ENCODE measurements at regions of chr4 and their contacts with region 1.

Region 1: GRCh38 chr4:82462415-82462831 is 32.0 kb downstream of the ENOPH1 start:
- DNase-seq: peak; percentile 88
- ATAC-seq: peak; percentile 91

Region 2: DNA sequence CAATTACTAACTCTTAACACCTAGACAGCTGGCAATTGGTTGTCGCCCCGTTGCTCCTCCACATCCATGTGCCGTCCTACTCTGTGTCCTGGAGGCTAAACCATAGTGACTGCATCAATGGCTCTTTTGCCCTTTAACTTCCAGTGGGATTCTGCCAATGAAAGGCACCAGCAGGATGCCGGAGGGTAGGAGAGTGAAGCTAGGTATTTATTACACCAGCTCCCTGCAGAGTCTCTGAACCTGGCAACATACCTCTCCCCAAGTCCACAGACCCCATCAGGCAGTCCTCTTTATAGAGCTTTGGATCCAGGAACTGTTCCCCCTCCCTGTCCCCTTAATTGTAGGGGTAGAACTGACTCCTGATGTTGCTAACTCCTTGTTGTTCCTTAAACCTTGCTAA is 515.4 kb before region 1 on chr4:
- intact Hi-C with region 1: no loop called
- DNase-seq: no peak
- ATAC-seq: no peak

Region 3: GRCh38 chr4:82213485-82214417 is 248.7 kb before region 1 on chr4:
- intact Hi-C with region 1: no loop called
- DNase-seq: no peak
- ATAC-seq: no peak

Region 4: GRCh38 chr4:82450966-82451755 is 11.3 kb before region 1 on chr4:
- intact Hi-C with region 1: no loop called
- DNase-seq: no peak
- ATAC-seq: no peak

Region 5: GRCh38 chr4:82500106-82500965 is 37.9 kb after region 1 on chr4:
- intact Hi-C with region 1: no loop called
- DNase-seq: no peak
- ATAC-seq: peak; percentile 41

Region 6: DNA sequence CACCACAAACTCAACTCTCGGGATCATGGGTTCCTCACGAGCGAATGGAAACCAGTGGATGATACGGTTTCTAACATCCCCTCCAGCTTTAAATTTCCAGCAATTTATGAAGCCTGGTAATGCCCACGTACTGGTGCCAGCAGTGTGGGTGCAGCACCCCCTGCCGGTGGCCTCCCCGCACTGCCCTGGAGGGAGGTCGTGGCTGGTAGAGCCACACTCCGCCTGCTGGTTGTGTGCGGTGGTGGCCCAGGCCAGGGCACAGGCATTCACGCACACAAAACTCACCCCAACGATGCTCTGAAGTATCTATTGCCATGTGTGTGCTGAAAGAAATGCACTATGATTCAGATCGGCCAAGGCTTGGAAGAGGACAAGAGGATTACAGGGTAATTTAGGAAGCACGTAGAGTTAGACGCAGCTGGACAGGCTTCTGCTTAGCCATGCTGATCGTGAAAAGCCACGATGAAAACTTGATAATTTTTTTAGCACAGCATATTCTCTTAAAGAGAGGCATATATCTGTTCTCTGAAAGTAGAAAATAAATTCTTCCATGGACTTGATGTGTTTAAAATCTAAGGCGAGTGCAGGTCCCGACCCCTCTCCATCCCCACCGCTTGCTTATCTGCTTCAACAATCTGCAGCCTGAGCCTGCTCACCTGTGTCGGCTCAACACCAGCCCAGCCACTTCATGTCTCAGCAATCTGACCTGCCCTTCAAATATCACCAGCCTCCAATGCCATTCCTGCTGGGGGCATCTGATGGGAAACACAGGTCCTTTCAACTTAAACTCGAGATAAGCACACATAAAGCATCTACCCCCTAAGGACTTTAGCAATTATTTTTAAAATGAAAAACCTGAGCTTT is 277.1 kb after region 1 on chr4:
- intact Hi-C with region 1: loop called (anchors 5 kb)
- DNase-seq: peak; percentile 78
- ATAC-seq: peak; percentile 89

Region 7: GRCh38 chr4:82890901-82891706 is 428.7 kb after region 1 on chr4 and contains the start of gene SEC31A:
- intact Hi-C with region 1: loop called (anchors 10 kb)
- DNase-seq: peak; percentile 98
- ATAC-seq: peak; percentile 99
- total RNA-seq, gene SEC31A: 82.1 TPM

Region 8: DNA sequence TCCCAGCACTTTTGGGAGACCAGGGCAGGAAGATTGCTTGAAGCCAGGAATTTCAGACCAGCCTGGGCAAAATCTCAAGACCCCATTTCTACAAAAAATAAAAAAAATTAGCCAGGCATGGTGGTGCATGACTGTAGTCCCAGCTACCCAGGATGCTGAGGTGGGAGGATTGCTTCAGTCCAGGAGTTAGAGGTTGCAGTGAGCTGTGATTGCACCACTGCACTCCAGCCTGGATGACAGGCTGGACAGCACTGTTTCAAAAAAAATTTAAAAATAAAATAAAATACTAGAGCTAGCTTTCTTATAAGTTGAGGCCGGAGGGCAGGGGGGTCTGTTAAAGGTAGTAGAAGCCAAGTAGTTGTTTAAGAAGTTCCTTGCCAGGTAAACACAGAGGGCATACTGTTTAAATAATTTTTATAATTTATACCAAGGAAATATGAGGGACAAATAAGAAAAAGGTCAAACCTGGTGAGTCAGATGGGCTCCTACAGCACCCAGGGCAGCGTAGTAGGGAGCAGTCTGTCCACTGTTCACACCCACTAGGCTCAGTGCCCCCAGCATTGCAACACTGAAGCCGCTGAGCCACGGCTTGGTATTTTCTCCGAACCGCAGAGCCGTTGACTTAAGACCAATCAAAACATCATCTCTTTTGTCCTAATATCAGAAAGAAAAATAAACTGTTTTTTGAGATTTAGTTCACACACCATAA is 804.9 kb after region 1 on chr4:
- intact Hi-C with region 1: loop called (anchors 10 kb)
- DNase-seq: no peak
- ATAC-seq: no peak